Activated CD4-positive, alpha-beta T cell treated with anti-CD3 and anti-CD28 coated beads, Interleukin-2, amount 10 ng/mL, durations not matched to agents 24 days and 14 days (primary cell): ENCODE measurements at regions of chr10 and their contacts with region 1.

Region 1: DNA sequence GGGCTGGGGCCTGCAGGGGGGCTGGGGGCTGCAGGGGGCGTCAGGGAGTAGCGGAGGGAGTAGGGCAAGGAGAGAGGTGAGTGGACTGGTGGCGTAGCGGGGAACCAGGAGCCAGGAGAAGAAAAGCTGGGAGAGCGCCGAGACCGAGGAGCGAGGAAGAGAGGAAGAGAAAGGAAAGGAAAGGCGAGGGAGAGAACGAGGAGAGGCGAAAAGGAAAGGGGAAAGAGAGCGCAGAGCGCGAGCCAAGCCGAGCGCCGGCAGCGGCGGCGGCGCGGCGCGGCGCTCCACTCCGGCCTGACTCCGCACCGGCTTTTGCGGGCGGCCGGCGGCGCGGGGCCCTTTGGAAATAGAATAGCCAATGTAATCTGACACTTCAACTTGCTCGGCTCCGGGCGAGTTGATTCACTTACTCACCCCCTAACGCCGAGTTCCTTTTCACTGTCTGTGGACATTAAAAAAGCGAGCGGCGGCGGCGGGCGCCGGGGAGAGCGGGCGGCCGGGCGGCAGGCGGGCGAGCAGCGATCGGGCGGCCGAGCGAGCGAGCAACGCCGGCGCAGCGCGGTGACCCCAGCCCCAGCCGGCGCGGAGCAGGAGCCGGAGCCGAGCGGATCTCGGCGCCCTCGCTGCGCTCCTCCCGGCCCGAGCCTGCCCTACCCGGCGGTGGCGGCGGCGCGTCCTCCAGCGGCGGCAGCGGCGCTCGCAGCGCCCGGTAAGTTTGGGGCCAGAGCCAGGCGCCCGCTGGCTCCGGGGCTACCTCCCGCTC is at the start of gene ZMIZ1:
- DNase-seq: peak; percentile 95
- H3K4me3 Mint-ChIP-seq: peak within 1 kb of the TSS; percentile 95
- H3K27ac Mint-ChIP-seq: peak within 1 kb of the TSS; percentile 87
- H3K4me1 Mint-ChIP-seq: peaks cover 53% of the 10 kb centered on the region
- H3K27me3 Mint-ChIP-seq: peaks cover 19% of the 10 kb centered on the region
- total RNA-seq, gene ZMIZ1: 66.3 and 71.7 TPM in 2 replicates

Region 2: GRCh38 chr10:78029269-78030226 is 1039.2 kb before region 1 on chr10 and contains the start of gene POLR3A:
- intact Hi-C with region 1: loop called (anchors 2 kb)
- DNase-seq: peak; percentile 97
- H3K4me3 Mint-ChIP-seq: peak within 1 kb of the TSS; percentile 99
- H3K27ac Mint-ChIP-seq: peak within 1 kb of the TSS; percentile 95
- H3K4me1 Mint-ChIP-seq: peaks cover 24% of the 10 kb centered on the region
- H3K27me3 Mint-ChIP-seq: no peaks in the 10 kb centered on the region
- total RNA-seq, gene POLR3A: 27.8 and 28.7 TPM in 2 replicates

Region 3: DNA sequence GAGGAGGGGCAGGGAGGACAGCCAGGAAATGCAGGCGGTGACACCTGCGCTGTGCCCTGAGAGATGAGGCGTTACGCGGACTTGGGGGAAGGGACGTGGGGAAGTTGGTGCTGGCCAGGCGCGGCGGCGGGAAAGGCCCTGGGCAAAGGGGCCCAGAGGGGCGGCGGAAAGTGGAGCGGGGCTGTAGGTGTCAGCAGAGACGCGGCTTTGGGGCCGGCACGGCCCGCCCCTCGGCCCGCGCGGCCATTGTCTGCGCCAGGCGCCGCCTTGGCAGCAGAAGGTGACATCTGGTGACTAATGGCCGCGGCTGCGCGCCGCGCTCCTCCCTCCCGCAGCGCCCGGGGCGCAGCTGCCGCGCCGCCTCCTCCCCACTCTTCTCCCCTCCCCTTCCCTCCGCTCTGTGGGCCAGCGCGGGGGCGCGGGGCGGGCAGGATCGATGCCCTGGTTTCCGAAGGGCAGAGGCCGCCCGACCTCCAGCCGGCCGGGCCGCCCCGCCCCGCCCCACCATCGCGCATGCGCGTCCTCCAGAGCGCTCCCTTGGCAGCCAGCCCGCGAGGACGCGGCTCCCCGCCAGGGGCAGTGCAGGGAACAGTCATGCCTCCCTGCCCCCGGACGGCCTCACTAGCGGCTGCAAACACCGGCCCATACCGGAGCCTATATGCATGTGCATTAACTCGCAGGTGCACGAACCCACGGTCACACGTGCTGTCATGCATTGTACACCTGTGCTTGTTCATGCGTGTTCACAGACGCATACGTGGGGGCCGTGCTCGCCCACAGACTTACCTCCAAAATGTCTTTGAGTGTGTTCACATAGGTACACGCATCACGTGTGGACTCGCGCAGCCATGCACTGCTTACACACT is 765.5 kb before region 1 on chr10:
- intact Hi-C with region 1: loop called (anchors 1 kb)
- DNase-seq: peak; percentile 97
- H3K4me3 Mint-ChIP-seq: peak overlapping the region; percentile 93
- H3K27ac Mint-ChIP-seq: peak overlapping the region; percentile 96
- H3K4me1 Mint-ChIP-seq: peaks cover 14% of the 10 kb centered on the region
- H3K27me3 Mint-ChIP-seq: peaks cover 23% of the 10 kb centered on the region

Region 4: DNA sequence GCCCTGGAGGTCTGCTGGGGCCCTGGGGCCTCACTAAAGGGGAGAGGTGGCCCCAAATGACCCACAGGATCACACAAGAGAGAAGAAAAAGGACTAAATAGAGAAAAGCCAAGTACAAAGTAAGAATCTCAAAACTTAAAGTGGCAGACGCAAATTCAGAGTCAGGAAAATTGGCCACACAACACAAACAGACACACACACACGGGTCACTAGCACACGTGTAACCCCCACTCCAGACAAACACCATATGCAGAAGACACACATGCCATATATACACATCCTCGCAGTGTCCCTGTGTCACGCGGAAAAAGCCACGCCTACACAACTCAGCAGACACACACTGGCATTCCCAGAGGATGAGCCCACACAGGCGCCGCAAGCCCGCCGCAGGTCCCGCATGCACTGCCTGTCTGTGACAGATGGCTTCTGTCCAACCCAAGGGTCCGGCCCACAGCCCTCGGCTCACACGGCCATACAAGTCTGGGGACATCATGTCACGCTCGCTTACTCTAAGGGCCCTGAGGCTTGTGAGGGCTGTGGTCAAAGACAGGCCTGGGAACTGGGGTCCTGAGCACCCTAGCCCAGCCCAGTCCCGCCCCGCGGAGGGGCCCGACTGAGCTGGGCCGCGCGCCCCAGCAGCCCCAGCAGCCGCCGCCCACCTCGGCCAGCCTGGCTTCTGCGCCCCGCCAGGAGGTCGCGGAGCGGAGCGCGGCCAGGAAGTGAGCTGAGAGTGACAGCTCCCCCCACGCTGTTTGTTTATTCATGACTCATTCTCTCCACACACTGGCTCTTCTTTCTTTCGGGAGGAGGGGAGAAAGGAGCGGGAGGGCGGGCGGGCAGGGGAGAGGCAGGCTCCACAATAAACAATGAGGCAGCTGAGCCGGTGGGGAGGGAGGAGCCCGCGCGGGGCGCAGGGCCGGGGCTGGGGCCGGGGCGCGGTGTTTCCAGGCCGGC is 95.5 kb before region 1 on chr10:
- intact Hi-C with region 1: loop called (anchors 1 kb)
- DNase-seq: peak; percentile 93
- H3K4me3 Mint-ChIP-seq: peak overlapping the region; percentile 70
- H3K27ac Mint-ChIP-seq: peak overlapping the region; percentile 91
- H3K4me1 Mint-ChIP-seq: peaks cover 40% of the 10 kb centered on the region
- H3K27me3 Mint-ChIP-seq: peaks cover 5% of the 10 kb centered on the region

Region 5: DNA sequence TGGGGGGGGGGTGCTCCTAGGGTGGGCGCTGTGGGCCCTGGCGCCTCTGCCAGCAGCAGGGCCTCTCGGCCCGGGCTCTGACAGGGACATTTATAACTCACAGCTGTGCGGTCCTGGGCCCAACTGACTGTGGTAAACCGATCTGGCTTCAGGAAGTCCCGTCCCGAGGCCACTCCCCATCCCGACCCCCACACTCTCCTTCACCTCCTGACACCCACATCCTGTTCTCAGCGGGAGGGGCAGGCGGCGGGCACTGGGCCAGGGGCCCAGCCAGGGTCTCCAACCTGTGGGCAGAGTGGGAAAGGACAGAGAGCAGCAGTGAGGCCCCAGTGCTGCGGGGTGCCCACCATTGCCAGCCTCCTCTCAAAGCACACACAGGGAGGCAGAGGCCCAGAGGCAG is 69.1 kb after region 1 on chr10:
- intact Hi-C with region 1: loop called (anchors 5 kb)
- DNase-seq: peak; percentile 81
- H3K4me3 Mint-ChIP-seq: peak overlapping the region; percentile 73
- H3K27ac Mint-ChIP-seq: peak overlapping the region; percentile 82
- H3K4me1 Mint-ChIP-seq: peaks cover 32% of the 10 kb centered on the region
- H3K27me3 Mint-ChIP-seq: no peaks in the 10 kb centered on the region

Region 6: DNA sequence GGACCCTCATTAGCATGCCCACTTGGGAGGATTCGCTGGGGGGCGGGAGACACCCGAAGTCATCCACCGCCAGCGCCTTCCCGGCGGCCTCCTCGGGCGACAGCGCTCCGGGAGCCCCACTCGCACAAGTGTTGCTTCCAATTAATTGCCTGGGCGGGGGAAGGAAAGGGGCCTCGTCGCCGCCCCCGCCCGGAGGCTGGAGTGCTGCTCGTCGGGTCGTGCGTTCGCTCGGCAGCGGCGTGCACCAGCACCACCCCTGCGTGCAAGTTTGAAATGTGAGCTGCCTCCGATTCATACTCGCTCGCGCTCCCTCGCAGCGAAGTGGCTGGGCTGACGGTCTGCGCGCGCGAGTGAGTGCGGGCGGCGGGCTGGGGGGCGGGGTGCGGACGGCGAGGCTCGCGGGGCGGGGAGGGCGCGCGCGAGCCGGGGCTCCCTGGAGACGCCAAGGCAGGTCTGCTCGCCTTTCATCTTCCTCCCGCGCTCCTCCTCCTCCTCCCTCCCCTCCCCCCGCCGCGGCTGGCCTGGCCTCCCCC is 173.9 kb after region 1 on chr10:
- intact Hi-C with region 1: loop called (anchors 1 kb)
- DNase-seq: peak; percentile 91
- H3K4me3 Mint-ChIP-seq: peak overlapping the region; percentile 86
- H3K27ac Mint-ChIP-seq: peak overlapping the region; percentile 89
- H3K4me1 Mint-ChIP-seq: peaks cover 57% of the 10 kb centered on the region
- H3K27me3 Mint-ChIP-seq: no peaks in the 10 kb centered on the region

Region 7: GRCh38 chr10:79331709-79332108 is 263.0 kb after region 1 on chr10:
- intact Hi-C with region 1: loop called (anchors 10 kb)
- DNase-seq: peak; percentile 95
- H3K4me3 Mint-ChIP-seq: peak overlapping the region; percentile 56
- H3K27ac Mint-ChIP-seq: peak overlapping the region; percentile 95
- H3K4me1 Mint-ChIP-seq: peaks cover 57% of the 10 kb centered on the region
- H3K27me3 Mint-ChIP-seq: no peaks in the 10 kb centered on the region